ENCODE measurements at regions of chr10 and their contacts with region 1.

Region 1: DNA sequence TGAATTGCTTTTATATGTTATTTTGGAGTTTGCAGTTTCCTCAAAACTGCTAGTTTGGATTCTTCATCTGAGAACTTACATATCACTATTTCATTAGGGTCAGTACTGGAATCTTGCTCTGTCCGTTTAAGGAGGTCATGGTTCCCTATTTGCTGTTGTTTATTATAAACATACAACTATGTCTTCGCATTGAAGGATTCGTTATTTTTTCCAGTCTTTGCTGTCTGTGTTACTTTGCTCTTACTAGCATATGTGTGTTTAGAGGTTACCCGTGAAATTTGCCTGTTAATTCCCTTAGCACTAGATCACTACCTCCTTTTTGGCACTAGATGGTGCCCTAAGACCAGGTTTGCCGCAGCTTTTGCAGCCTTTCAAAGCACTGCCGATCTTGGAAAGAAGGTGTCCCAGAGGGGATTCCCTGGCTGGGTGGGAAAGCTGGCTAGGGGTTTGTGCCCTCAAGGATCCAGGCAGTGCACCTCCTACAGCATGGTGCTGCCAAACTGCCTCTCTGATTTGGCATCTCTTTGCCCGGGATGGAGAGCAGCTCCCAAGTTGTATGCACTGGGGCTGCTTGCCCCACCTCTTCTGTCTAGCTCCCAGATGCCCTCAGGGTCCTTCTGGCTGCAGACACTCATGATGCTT is 103.1 kb upstream of the APBB1IP start:
- DNase-seq: peak; percentile 76
- ATAC-seq: peak; percentile 91
- H3K4me3 Mint-ChIP-seq: peak overlapping the region; percentile 73
- H3K27ac Mint-ChIP-seq: peak overlapping the region; percentile 81
- H3K4me1 Mint-ChIP-seq: peaks cover 8% of the 10 kb centered on the region
- H3K27me3 Mint-ChIP-seq: no peaks in the 10 kb centered on the region

Region 2: GRCh38 chr10:26157734-26158133 is 177.3 kb before region 1 on chr10:
- CTCF ChIA-PET with region 1: no interaction called
- DNase-seq: no peak
- ATAC-seq: no peak
- H3K4me3 Mint-ChIP-seq: no peak overlapping the region
- H3K27ac Mint-ChIP-seq: no peak overlapping the region
- H3K4me1 Mint-ChIP-seq: no peaks in the 10 kb centered on the region
- H3K27me3 Mint-ChIP-seq: peaks cover 4% of the 10 kb centered on the region

Region 3: DNA sequence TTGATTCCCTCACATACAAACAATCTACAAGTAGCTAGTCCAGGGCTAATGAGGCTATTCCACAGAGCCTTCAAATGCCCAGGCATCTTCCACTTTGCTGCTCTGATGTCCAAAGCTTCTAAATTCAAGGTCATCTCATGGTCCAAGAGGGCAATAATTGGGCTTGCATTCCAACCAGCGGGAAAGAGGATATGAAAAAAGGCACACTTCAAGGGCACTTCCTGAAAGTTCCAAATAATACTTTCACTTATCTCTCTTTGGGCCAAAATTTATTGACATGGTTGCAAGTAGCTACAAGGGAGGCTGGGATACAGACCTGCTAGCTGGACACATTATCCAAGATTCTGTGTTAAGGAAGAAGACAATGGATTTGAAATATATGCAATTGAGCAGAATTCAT is 77.9 kb after region 1 on chr10:
- CTCF ChIA-PET with region 1: no interaction called
- DNase-seq: no peak
- ATAC-seq: no peak
- H3K4me3 Mint-ChIP-seq: no peak overlapping the region
- H3K27ac Mint-ChIP-seq: no peak overlapping the region
- H3K4me1 Mint-ChIP-seq: no peaks in the 10 kb centered on the region
- H3K27me3 Mint-ChIP-seq: peaks cover 13% of the 10 kb centered on the region

Region 4: DNA sequence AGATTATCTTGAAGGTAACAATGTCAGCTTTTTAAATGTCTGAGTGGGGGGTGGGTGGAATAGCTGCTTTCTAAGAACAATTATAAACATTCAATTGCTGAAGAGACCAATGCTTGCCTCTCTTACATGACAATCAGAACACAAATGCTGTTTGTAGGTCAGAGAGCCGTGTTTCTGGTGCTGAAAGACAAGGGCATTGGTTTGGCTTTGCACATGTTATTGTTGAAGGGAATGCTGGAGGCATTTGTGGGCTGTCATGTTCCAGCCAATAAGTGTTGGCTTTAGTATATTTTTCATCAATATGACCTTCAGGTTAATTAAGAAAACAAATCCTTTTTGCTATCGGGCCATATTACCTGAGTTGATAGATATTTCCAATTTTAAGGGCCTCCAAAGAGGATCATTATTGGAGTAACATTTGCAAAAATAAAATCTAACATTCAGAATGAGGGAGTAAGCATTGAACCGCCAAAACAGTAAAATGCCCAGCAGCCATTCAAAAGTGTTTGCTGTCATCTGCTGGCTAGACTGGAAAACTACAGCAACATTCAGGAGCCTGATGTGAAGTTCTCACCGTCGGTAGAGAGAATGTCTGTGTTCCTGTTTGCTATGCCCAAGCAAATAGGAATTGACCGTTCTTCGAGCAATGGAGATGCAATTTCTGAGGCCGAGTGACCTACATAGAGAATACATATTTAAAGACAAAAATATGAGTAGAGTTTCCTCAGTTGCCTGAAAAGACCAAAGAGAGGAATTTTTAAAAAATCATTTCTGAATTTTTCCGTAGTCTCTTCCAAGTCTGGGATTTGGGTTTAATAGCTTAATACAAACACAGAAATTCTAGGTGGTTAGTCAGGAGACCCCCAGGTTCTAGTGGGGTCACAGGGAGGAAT is 221.9 kb after region 1 on chr10:
- CTCF ChIA-PET with region 1: interaction called, 49 read pairs
- DNase-seq: peak; percentile 51
- ATAC-seq: peak; percentile 58
- H3K4me3 Mint-ChIP-seq: no peak overlapping the region
- H3K27ac Mint-ChIP-seq: no peak overlapping the region
- H3K4me1 Mint-ChIP-seq: peaks cover 2% of the 10 kb centered on the region
- H3K27me3 Mint-ChIP-seq: no peaks in the 10 kb centered on the region

Measured in activated CD8-positive, alpha-beta memory T cell treated with anti-CD3 and anti-CD28 coated beads, Interleukin-2, amount 10 ng/mL, durations not matched to agents 7 days and 5 days (primary cell).